PC-3 (cell line): ENCODE measurements at regions of chr5 and their contacts with region 1.

Region 1: GRCh38 chr5:14879937-14880589 is 8.5 kb upstream of the ANKH start:
- DNase-seq: no peak
- ATAC-seq: no peak
- H3K4me3 ChIP-seq: no peak overlapping the region
- H3K27ac ChIP-seq: no peak overlapping the region
- H3K4me1 ChIP-seq: peaks cover 17% of the 10 kb centered on the region
- H3K27me3 ChIP-seq: 0 out of 2 replicates have a peak, but pooled peaks cover 8% of the 10 kb centered on the region
- CTCF ChIP-seq: no peak

Region 2: DNA sequence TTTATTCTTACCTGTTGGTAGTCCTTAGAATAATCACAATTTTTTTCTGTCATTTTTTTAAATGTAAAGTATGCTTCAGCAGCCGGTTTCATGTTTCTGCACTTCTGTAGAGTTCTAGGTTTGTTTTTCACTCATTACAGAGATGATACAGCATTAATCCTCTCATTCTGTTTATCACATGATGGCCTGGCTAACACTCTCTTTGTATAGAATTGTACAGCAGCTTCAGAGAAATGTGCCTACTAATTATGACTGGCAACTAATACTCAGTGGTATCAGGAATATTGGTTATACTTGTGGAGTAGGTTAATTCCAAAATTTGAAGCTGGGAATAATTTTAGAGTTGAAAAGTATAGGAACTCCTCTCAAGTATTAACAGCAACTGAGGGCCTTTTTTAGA is 491.3 kb before region 1 on chr5:
- CTCF ChIA-PET with region 1: no interaction called
- POLR2A ChIA-PET with region 1: no interaction called
- intact Hi-C with region 1: no loop called
- DNase-seq: no peak
- ATAC-seq: no peak
- H3K4me3 ChIP-seq: no peak overlapping the region
- H3K27ac ChIP-seq: no peak overlapping the region
- H3K4me1 ChIP-seq: no peaks in the 10 kb centered on the region
- H3K27me3 ChIP-seq: no peaks in the 10 kb centered on the region
- CTCF ChIP-seq: no peak

Region 3: GRCh38 chr5:15105796-15106393 is 225.8 kb after region 1 on chr5:
- CTCF ChIA-PET with region 1: interaction called, 14 read pairs
- POLR2A ChIA-PET with region 1: no interaction called
- intact Hi-C with region 1: no loop called
- DNase-seq: peak; percentile 74
- ATAC-seq: no peak; the same call in 1 of the 2 replicates
- H3K4me3 ChIP-seq: no peak overlapping the region
- H3K27ac ChIP-seq: no peak overlapping the region
- H3K4me1 ChIP-seq: peaks cover 14% of the 10 kb centered on the region
- H3K27me3 ChIP-seq: no peaks in the 10 kb centered on the region
- CTCF ChIP-seq: peak; percentile 89